PC-3 (cell line): ENCODE measurements at regions of chr3 and their contacts with region 1.

Region 1: DNA sequence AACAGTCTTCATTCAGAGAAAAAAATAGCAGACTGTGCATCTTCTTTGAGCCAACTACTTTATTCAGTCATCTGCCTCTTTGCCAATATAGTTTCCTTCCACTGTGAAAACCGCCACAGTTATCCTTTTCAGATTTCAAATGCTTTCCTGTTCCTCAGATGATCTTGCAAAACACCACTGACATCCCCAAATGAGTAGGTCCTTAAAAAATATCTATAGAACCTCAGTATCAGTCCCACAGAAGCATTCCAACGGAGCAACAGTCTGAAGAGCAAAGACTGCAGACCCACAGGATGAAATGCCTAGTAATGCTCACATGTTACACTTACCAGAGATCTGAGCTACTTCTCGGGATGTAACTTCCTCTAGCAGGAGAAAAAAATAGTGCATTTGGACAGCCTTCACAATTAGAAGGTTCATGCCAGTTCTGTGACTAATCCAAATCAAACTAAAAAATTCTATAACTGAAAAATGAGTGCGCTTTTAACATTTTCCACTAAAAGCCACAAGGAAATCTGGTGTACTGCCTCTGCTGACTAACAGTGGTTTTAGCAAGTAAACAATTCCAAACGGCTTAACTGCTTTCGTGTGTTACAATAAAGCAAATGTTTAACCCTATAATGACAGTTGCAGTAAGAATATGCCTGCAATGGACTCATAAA is at the start of gene ANKRD28:
- DNase-seq: peak; percentile 98
- ATAC-seq: peak; percentile 85
- H3K4me3 ChIP-seq: peak within 1 kb of the TSS; percentile 68
- H3K27ac ChIP-seq: peak within 1 kb of the TSS; percentile 94
- H3K4me1 ChIP-seq: peaks cover 59% of the 10 kb centered on the region
- H3K27me3 ChIP-seq: no peaks in the 10 kb centered on the region
- CTCF ChIP-seq: peak; percentile 39; the same call in 1 of the 2 replicates
- total RNA-seq, gene ANKRD28: 52.1 and 53.0 TPM in 2 replicates

Region 2: DNA sequence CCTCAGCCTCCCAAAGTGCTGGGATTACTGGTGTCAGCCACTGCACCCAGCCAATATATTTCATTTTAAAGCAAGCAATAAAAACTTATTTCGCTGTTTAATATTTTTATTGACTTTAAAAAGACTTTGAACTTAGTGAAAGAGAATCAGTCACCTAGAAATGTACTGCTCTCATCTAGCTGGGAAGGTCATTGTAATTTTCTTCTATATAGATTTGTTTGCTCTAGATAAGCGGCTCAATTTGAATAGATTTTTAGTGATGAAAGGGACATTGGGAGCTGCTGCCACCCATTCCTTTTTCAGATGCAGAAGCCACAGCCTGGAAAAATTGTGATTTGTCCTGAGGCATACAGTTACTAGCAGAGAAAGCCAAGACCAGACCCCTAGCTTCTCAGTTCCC is 551.6 kb before region 1 on chr3:
- CTCF ChIA-PET with region 1: no interaction called
- POLR2A ChIA-PET with region 1: no interaction called
- intact Hi-C with region 1: no loop called
- DNase-seq: no peak
- ATAC-seq: no peak
- H3K4me3 ChIP-seq: no peak overlapping the region
- H3K27ac ChIP-seq: no peak overlapping the region
- H3K4me1 ChIP-seq: no peaks in the 10 kb centered on the region
- H3K27me3 ChIP-seq: no peaks in the 10 kb centered on the region
- CTCF ChIP-seq: no peak

Region 3: DNA sequence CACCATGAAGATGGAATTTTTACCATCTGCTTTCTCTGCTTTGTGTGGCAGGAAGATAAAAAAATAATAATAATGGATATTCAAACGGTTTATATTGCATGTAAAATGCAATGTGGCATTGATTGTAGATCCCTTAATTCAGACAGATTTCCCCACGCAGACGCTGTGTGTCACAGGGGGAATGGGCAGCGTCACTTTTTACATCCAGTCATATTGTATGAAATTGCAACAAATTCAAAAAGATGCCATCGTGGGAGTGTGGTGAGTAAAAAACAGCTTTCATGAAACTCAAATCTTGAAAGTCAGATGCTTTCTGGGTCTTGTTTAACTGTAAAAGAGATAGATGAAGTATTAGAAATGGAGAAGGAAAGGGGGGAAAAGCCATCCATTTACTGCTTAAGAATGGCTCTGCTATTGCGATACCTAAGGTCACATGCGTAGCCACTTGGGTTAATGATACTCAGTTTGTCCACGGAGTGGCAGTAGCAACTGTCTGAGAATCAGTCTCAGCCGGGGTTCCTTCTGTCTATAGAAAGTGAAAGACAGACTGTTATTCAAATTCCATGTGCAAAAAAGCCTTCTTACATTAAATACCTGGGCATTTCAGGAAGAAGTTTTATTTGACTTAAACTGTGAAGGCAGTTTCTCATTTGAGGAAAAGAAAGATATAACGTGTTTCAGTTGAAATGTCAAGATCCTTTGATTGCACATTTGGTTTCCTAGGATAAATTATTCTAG is 167.7 kb before region 1 on chr3:
- CTCF ChIA-PET with region 1: interaction called, 6 read pairs
- POLR2A ChIA-PET with region 1: interaction called, 19 read pairs
- intact Hi-C with region 1: loop called (anchors 1 kb)
- DNase-seq: peak; percentile 92
- ATAC-seq: peak; percentile 68
- H3K4me3 ChIP-seq: peak overlapping the region; percentile 55
- H3K27ac ChIP-seq: peak overlapping the region; percentile 89
- H3K4me1 ChIP-seq: peaks cover 50% of the 10 kb centered on the region
- H3K27me3 ChIP-seq: no peaks in the 10 kb centered on the region
- CTCF ChIP-seq: peak; percentile 95

Region 4: GRCh38 chr3:15636003-15636709 is 161.6 kb before region 1 on chr3:
- CTCF ChIA-PET with region 1: no interaction called
- POLR2A ChIA-PET with region 1: interaction called, 19 read pairs
- intact Hi-C with region 1: loop called (anchors 1 kb)
- DNase-seq: peak; percentile 93
- ATAC-seq: peak; percentile 67
- H3K4me3 ChIP-seq: peak overlapping the region; percentile 53
- H3K27ac ChIP-seq: peak overlapping the region; percentile 97
- H3K4me1 ChIP-seq: peaks cover 72% of the 10 kb centered on the region
- H3K27me3 ChIP-seq: no peaks in the 10 kb centered on the region
- CTCF ChIP-seq: no peak

Region 5: GRCh38 chr3:15647611-15648167 is 150.1 kb before region 1 on chr3:
- CTCF ChIA-PET with region 1: interaction called, 3 read pairs
- POLR2A ChIA-PET with region 1: interaction called, 11 read pairs
- intact Hi-C with region 1: loop called (anchors 5 kb)
- DNase-seq: peak; percentile 90
- ATAC-seq: peak; percentile 39
- H3K4me3 ChIP-seq: peak overlapping the region; percentile 51
- H3K27ac ChIP-seq: peak overlapping the region; percentile 98
- H3K4me1 ChIP-seq: peaks cover 42% of the 10 kb centered on the region
- H3K27me3 ChIP-seq: no peaks in the 10 kb centered on the region
- CTCF ChIP-seq: no peak

Region 6: GRCh38 chr3:15667484-15667883 is 130.3 kb before region 1 on chr3:
- CTCF ChIA-PET with region 1: no interaction called
- POLR2A ChIA-PET with region 1: no interaction called
- intact Hi-C with region 1: no loop called
- DNase-seq: no peak
- ATAC-seq: no peak
- H3K4me3 ChIP-seq: no peak overlapping the region
- H3K27ac ChIP-seq: no peak overlapping the region
- H3K4me1 ChIP-seq: no peaks in the 10 kb centered on the region
- H3K27me3 ChIP-seq: no peaks in the 10 kb centered on the region
- CTCF ChIP-seq: no peak

Region 7: DNA sequence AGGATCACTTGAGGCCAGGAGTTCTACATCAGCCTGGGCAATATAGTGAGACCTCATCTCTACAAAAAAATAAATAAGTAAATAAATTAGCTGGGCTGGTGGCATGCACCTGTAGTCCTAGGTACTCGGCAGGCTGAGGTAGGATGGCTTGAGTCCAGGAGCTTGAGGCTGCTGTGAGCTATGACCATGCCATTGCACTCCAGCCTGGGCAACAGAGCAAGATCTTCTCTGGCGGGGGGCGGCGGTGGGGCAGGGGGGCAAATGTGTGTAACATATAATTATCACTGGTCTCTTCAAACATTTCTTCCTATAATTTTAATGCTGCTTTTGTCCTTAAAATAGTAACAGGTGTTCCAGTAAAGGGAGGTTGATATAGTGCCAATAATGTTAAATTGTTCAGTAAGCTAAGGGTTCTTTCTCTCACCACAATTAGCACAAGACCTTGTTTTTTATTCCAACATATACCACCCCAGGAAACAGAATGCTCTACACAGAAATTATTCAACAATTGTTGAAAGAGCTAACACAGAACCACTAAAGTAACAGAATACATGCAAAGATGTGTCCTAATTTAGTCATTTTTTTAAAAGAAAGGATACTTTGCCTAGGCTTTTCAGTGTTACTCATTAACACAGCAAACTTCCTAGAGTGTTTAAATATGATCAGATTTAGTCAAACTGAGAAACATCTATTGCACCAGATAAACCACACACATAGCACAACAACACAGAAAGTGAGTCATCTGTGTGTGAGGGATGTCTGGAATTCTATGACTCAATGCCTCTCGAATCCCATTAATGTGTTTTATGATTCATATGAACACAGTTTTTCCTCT is 29.1 kb before region 1 on chr3:
- CTCF ChIA-PET with region 1: no interaction called
- POLR2A ChIA-PET with region 1: interaction called, 5 read pairs
- intact Hi-C with region 1: loop called (anchors 1 kb)
- DNase-seq: peak; percentile 95
- ATAC-seq: peak; percentile 93
- H3K4me3 ChIP-seq: peak overlapping the region; percentile 17; the same call in 1 of the 2 replicates
- H3K27ac ChIP-seq: peak overlapping the region; percentile 81
- H3K4me1 ChIP-seq: peaks cover 22% of the 10 kb centered on the region
- H3K27me3 ChIP-seq: no peaks in the 10 kb centered on the region
- CTCF ChIP-seq: no peak

Region 8: GRCh38 chr3:15892311-15893227 is 94.8 kb after region 1 on chr3:
- CTCF ChIA-PET with region 1: interaction called, 12 read pairs
- POLR2A ChIA-PET with region 1: no interaction called
- intact Hi-C with region 1: no loop called
- DNase-seq: peak; percentile 10
- ATAC-seq: peak; percentile 82
- H3K4me3 ChIP-seq: no peak overlapping the region
- H3K27ac ChIP-seq: no peak overlapping the region
- H3K4me1 ChIP-seq: peaks cover 6% of the 10 kb centered on the region
- H3K27me3 ChIP-seq: no peaks in the 10 kb centered on the region
- CTCF ChIP-seq: no peak